HEK293 (cell line): ENCODE measurements at regions of chr10 and their contacts with region 1.

Region 1: GRCh38 chr10:123132576-123133477 is 2.9 kb upstream of the HMX3 start:
- H3K4me3 ChIP-seq: peak overlapping the region; percentile 16; the same call in 1 of the 2 replicates
- H3K27ac ChIP-seq: no peak overlapping the region
- H3K4me1 ChIP-seq: no peaks in the 10 kb centered on the region
- CTCF ChIP-seq: peak; percentile 85

Region 2: GRCh38 chr10:123154092-123154921 is 21.5 kb after region 1 on chr10 and contains the start of gene BUB3:
- CTCF ChIA-PET with region 1: interaction called, 10 read pairs
- POLR2A ChIA-PET with region 1: interaction called, 6 read pairs
- H3K4me3 ChIP-seq: peak within 1 kb of the TSS; percentile 93
- H3K27ac ChIP-seq: peak within 1 kb of the TSS; percentile 95
- H3K4me1 ChIP-seq: peaks cover 13% of the 10 kb centered on the region
- CTCF ChIP-seq: peak; percentile 62; the same call in 1 of the 2 replicates

Region 3: DNA sequence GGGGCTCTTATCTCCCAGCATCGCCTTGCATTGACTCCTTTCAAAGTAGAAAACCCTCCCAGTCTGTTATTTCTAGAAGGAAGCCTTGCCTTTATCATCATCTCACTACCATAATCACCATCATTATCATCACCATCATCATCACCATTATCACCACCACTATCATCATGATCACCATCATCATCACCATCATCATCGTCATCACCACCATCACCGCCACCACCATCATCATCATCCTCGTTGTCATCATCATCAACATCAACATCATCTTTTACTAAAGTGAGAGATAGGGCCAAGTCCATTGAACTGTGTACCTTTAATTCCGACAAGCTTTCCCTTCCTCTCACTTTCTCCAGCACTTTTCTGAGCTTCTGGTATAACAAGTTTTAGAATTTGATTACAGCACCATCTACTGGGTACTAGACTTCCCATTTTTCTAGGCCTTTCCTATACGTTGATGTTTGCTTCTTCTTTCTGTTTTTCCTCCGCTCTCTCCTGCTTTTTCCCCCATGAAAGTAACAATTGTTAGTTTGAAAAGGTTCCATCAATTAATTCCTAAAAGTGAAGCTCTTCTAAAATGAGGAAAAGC is 247.8 kb after region 1 on chr10:
- CTCF ChIA-PET with region 1: interaction called, 16 read pairs
- POLR2A ChIA-PET with region 1: no interaction called
- H3K4me3 ChIP-seq: no peak overlapping the region
- H3K27ac ChIP-seq: no peak overlapping the region
- H3K4me1 ChIP-seq: no peaks in the 10 kb centered on the region
- CTCF ChIP-seq: peak; percentile 24

Region 4: DNA sequence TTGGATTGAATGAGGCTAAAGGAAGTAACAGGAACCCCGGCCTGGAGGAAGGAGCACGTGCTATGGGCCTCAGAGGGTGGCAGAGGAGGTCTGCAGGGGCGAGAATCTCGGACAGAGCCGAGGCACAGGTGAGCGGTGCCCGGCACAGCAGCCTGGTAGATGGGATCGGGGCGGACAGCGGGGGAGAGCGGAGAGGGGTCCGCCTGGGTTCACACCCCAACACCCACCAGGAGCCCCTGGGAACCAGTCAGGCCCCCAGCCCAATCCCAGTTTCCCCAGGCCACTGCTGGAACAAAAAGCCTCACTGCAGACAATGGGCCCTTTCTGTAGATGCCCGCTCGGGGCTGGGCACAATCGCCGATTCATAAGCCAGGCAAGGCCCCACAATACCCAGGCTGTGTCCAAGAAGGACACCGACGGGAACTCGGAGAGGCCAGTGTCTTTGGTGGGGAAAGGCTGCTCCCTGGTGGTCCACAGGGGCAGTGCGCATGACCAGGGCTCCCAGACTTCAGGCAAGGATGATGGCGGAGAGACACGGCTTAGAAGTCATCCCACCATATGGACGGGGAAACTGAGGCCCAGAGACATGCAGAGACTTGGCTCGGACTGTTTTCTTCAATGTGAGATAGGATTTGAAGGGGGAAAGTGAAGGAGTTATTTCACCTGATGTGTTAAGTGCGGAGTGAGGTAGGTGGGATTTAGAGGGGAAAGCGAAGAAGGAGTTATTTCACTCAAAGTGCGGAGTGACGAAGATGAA is 426.4 kb after region 1 on chr10:
- CTCF ChIA-PET with region 1: interaction called, 20 read pairs
- POLR2A ChIA-PET with region 1: no interaction called
- H3K4me3 ChIP-seq: no peak overlapping the region
- H3K27ac ChIP-seq: no peak overlapping the region
- H3K4me1 ChIP-seq: no peaks in the 10 kb centered on the region
- CTCF ChIP-seq: peak; percentile 89